GM12878 (cell line): ENCODE measurements at regions of chr11 and their contacts with region 1.

Region 1: GRCh38 chr11:19116971-19117750 is at the start of gene ZDHHC13:
- DNase-seq: peak; percentile 92
- ATAC-seq: peak; percentile 96
- H3K4me3 ChIP-seq: peak within 1 kb of the TSS; percentile 97
- H3K27ac ChIP-seq: peak within 1 kb of the TSS; percentile 80
- H3K4me1 ChIP-seq: peaks cover 14% of the 10 kb centered on the region
- H3K27me3 ChIP-seq: no peaks in the 10 kb centered on the region
- CTCF ChIP-seq: peak; percentile 34 to 44 (median 43); a peak in 5 of 6 replicates
- EP300 ChIP-seq: no peak
- POLR2A ChIP-seq: peak; percentile 98
- RAD21 ChIP-seq: no peak
- polyA plus RNA-seq, gene ZDHHC13: 8.5 to 9.6 TPM

Region 2: DNA sequence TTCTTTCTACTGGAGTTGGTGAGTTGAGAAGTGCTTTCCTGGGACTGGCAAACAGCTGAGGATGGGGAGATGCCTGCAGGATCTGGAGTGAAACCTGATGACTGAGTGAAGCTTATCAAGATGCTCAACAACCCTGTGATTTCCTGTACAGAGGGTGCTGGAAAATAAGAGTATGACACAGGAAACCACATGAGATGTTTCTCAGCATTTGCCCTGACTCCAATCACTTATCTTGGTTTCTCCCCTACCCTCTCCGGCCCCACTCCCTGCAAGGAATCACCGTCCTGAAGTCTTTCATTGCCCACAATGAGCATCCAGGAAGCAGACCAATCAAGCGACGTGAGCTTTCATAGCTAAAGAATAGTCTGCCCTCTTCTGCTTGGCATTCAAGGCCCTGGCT is 56.5 kb before region 1 on chr11 and contains the start of gene MRGPRX2:
- CTCF ChIA-PET with region 1: no interaction called
- POLR2A ChIA-PET with region 1: no interaction called
- RAD21 ChIA-PET with region 1: no interaction called
- SMC1A ChIA-PET with region 1: no interaction called
- in situ Hi-C with region 1: no loop called
- intact Hi-C with region 1: no loop called
- DNase-seq: no peak
- ATAC-seq: no peak
- H3K4me3 ChIP-seq: no peak within 1 kb of the TSS
- H3K27ac ChIP-seq: no peak within 1 kb of the TSS
- H3K4me1 ChIP-seq: no peaks in the 10 kb centered on the region
- H3K27me3 ChIP-seq: no peaks in the 10 kb centered on the region; a peak in 1 of 4 replicates
- CTCF ChIP-seq: no peak
- EP300 ChIP-seq: no peak
- POLR2A ChIP-seq: no peak
- RAD21 ChIP-seq: no peak
- polyA plus RNA-seq, gene MRGPRX2: not detected

Region 3: DNA sequence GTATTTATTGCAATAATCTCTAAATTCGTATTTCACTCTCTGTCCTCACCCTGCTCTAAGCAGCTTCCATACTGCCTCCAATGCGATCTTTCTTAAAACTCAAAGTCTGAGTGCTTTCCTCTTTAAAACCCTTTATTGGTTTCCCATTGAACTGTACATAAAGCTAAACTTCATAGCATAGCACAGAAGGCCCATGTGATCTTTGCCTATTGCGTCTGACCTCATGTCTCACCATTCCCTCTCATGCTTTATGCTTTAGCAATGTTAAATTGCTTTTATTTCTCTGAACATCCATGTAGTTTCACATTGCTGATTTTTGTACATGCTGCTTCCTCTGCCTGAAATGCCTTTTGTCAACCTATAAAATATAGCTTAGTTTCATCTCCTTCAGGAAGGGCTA is 28.2 kb after region 1 on chr11:
- CTCF ChIA-PET with region 1: no interaction called
- POLR2A ChIA-PET with region 1: interaction called, 10 read pairs
- RAD21 ChIA-PET with region 1: no interaction called
- SMC1A ChIA-PET with region 1: interaction called, 6 read pairs
- in situ Hi-C with region 1: no loop called
- intact Hi-C with region 1: no loop called
- DNase-seq: no peak
- ATAC-seq: no peak
- H3K4me3 ChIP-seq: no peak overlapping the region
- H3K27ac ChIP-seq: no peak overlapping the region
- H3K4me1 ChIP-seq: no peaks in the 10 kb centered on the region
- H3K27me3 ChIP-seq: no peaks in the 10 kb centered on the region
- CTCF ChIP-seq: no peak
- EP300 ChIP-seq: no peak
- POLR2A ChIP-seq: no peak
- RAD21 ChIP-seq: no peak

Region 4: GRCh38 chr11:19240420-19241259 is 123.5 kb after region 1 on chr11 and contains the start of gene E2F8:
- CTCF ChIA-PET with region 1: interaction called, 3 read pairs
- POLR2A ChIA-PET with region 1: no interaction called
- RAD21 ChIA-PET with region 1: interaction called, 3 read pairs
- SMC1A ChIA-PET with region 1: interaction called, 4 read pairs
- in situ Hi-C with region 1: no loop called
- intact Hi-C with region 1: loop called (anchors 1 kb)
- DNase-seq: peak; percentile 88
- ATAC-seq: peak; percentile 87
- H3K4me3 ChIP-seq: peak within 1 kb of the TSS; percentile 92
- H3K27ac ChIP-seq: peak within 1 kb of the TSS; percentile 91
- H3K4me1 ChIP-seq: peaks cover 22% of the 10 kb centered on the region
- H3K27me3 ChIP-seq: no peaks in the 10 kb centered on the region
- CTCF ChIP-seq: no peak
- EP300 ChIP-seq: peak in 1 of 2 experiments; percentile 64; a peak in 1 of 4 replicates
- POLR2A ChIP-seq: peak; percentile 20; the same call in 1 of the 2 replicates
- RAD21 ChIP-seq: no peak
- polyA plus RNA-seq, gene E2F8: 8.8 to 9.2 TPM

Region 5: GRCh38 chr11:19441752-19442553 is 324.8 kb after region 1 on chr11:
- CTCF ChIA-PET with region 1: no interaction called
- POLR2A ChIA-PET with region 1: no interaction called
- RAD21 ChIA-PET with region 1: no interaction called
- SMC1A ChIA-PET with region 1: no interaction called
- in situ Hi-C with region 1: no loop called
- intact Hi-C with region 1: loop called (anchors 10 kb)
- DNase-seq: peak; percentile 95
- ATAC-seq: peak; percentile 95
- H3K4me3 ChIP-seq: no peak overlapping the region
- H3K27ac ChIP-seq: peak overlapping the region; percentile 88
- H3K4me1 ChIP-seq: peaks cover 27% of the 10 kb centered on the region
- H3K27me3 ChIP-seq: no peaks in the 10 kb centered on the region
- CTCF ChIP-seq: no peak
- EP300 ChIP-seq: peak; percentile 92 to 99
- POLR2A ChIP-seq: no peak
- RAD21 ChIP-seq: peak; percentile 22; the same call in 1 of the 2 replicates